Sciatic nerve (tissue), 2 donors: ENCODE measurements at regions of chr20 and their contacts with region 1.

Region 1: GRCh38 chr20:56875046-56875551 is 246.0 kb downstream of the TFAP2C start:
- DNase-seq: no peak
- ATAC-seq: no peak

Region 2: DNA sequence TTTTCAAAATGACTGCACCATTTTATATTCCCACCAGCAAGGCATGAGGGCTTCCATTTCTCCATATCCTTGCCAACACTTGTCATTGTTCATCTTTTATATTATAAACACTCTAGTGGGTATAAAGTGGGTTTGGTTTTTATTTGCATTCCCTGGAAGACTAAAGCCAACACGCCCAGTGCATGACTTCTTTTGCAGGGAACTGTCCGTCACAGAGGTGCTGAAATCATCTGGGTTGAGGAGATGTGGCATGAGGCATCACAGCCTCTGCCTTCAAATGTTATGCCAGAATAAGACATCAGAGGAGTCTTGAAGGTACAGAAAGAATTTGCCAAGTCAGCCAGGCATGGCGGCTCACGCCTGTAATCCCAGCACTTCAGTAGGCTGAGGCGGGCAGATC is 546.2 kb before region 1 on chr20:
- intact Hi-C with region 1: loop called (anchors 5 kb)
- DNase-seq: no peak
- ATAC-seq: no peak